GM12878 (cell line): ENCODE measurements at regions of chr17 and their contacts with region 1.

Region 1: DNA sequence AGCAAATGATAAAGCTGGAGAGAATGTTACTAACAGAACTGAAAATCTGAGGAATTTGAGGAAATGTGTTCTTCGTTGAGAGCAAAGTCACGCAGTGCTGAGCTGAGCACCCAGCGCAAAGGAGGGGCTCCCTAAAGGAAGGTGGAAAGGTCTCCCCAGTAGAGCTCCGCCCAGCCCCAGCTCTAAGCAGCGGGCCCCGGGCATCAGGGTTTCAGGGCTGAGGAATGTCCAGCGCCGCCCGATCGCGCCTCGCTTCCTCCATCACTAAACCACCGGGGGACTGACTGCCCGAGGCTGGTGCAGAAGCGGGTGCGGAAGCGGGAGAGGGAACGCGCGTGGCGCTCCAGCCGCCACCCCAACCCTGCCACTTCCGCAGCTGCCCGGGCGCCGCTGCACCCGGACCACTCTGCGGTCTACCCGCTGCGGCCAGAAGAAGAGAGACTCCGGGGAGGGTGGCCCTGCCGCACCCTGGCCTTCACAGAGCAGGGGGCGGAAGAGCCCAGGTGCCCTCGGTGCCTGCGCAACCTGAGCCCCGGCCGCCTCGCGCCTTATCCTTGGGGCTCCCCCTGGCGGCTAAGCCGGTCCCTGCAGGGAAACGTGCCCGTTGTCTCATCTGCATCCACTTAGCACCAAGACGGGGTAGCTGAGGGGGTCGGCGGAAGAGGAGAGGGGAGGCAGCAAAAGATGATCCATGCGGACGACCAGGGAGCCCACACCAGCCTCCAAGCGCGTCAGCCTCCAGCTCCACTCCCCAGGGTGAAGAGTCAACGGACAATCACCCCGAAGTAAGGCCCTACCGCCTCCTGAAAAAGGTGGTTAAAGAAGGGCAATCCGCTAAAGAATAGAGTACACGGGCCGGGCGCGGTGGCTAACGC is 12.4 kb upstream of the GUCY2D start:
- DNase-seq: peak; percentile 49
- ATAC-seq: peak; percentile 94
- H3K4me3 ChIP-seq: peak overlapping the region; percentile 63; the same call in 1 of the 2 replicates
- H3K27ac ChIP-seq: no peak overlapping the region
- H3K4me1 ChIP-seq: peaks cover 5% of the 10 kb centered on the region
- H3K27me3 ChIP-seq: 0 out of 4 replicates have a peak, but pooled peaks cover 0 to 2% of the 10 kb centered on the region in 2 experiments
- CTCF ChIP-seq: peak; percentile 93 to 98 (median 94)
- EP300 ChIP-seq: no peak
- POLR2A ChIP-seq: peak; percentile 74
- RAD21 ChIP-seq: peak; percentile 68

Region 2: GRCh38 chr17:7740481-7741001 is 249.5 kb before region 1 on chr17:
- CTCF ChIA-PET with region 1: interaction called, 50 read pairs
- POLR2A ChIA-PET with region 1: no interaction called
- RAD21 ChIA-PET with region 1: interaction called, 28 read pairs
- SMC1A ChIA-PET with region 1: interaction called, 25 read pairs
- in situ Hi-C with region 1: no loop called
- intact Hi-C with region 1: loop called (anchors 1 kb)
- DNase-seq: no peak
- ATAC-seq: no peak
- H3K4me3 ChIP-seq: no peak overlapping the region
- H3K27ac ChIP-seq: no peak overlapping the region
- H3K4me1 ChIP-seq: no peaks in the 10 kb centered on the region
- H3K27me3 ChIP-seq: no peaks in the 10 kb centered on the region; a peak in 2 of 4 replicates
- CTCF ChIP-seq: no peak
- EP300 ChIP-seq: no peak
- POLR2A ChIP-seq: no peak
- RAD21 ChIP-seq: no peak

Region 3: GRCh38 chr17:7825206-7825990 is 164.6 kb before region 1 on chr17:
- CTCF ChIA-PET with region 1: interaction called, 9 read pairs
- POLR2A ChIA-PET with region 1: no interaction called
- RAD21 ChIA-PET with region 1: interaction called, 5 read pairs
- SMC1A ChIA-PET with region 1: interaction called, 3 read pairs
- in situ Hi-C with region 1: loop called (anchors 5 kb)
- intact Hi-C with region 1: loop called (anchors 1 kb)
- DNase-seq: no peak
- ATAC-seq: 0 out of 3 replicates have a peak, but pooled peaks have one; percentile 28
- H3K4me3 ChIP-seq: no peak overlapping the region
- H3K27ac ChIP-seq: no peak overlapping the region
- H3K4me1 ChIP-seq: no peaks in the 10 kb centered on the region
- H3K27me3 ChIP-seq: no peaks in the 10 kb centered on the region; a peak in 1 of 4 replicates
- CTCF ChIP-seq: no peak; a peak in 1 of 6 replicates
- EP300 ChIP-seq: no peak
- POLR2A ChIP-seq: no peak
- RAD21 ChIP-seq: no peak

Region 4: DNA sequence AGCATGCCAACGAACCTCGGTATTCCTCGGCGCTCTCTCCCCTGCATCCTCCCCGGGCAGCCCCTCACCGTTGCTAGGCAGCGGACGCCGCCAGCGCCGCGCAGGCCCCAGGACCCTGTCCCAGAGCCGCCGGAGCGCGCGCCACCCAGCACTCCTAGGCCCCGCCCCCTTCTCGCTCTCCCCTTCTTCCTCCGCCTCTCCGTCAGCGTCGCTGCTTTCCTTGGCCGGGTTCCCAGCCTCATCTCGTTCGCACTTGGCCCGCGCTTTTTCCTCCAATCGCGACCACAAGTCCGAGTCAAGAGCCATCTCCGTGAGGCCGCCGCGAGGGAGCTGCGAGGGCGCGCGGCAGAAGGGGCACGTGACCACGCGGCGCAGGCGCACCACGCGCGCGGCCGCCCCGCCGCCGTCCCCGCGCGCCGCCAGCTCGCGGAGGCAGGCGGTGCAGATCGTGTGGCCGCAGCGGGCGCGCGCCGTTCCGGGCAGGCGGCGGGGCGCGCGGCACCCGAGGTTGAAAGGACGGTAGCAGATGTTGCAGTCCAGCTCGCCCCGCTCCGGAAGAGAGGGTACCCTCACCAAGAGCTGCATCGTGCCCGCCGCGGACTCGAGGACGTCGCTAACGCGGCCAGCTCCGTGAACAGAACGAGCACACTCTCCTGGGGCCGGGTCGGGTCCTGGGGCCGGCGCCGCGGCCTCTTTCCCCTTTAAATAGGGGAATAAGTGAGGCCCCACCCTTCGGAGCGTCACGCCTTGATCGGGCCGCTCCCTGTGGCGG is 74.2 kb before region 1 on chr17 and contains the start of gene RNF227:
- CTCF ChIA-PET with region 1: interaction called, 79 read pairs
- POLR2A ChIA-PET with region 1: interaction called, 6 read pairs
- RAD21 ChIA-PET with region 1: interaction called, 75 read pairs
- SMC1A ChIA-PET with region 1: interaction called, 39 read pairs
- in situ Hi-C with region 1: loop called (anchors 5 kb)
- intact Hi-C with region 1: loop called (anchors 1 kb)
- DNase-seq: peak; percentile 57
- ATAC-seq: peak; percentile 87
- H3K4me3 ChIP-seq: peak within 1 kb of the TSS; percentile 76
- H3K27ac ChIP-seq: peak within 1 kb of the TSS; percentile 34
- H3K4me1 ChIP-seq: peaks cover 10% of the 10 kb centered on the region
- H3K27me3 ChIP-seq: no peaks in the 10 kb centered on the region
- CTCF ChIP-seq: 0 out of 6 replicates have a peak, but pooled peaks of 1 of the 3 experiments have one; percentile 6
- EP300 ChIP-seq: no peak
- POLR2A ChIP-seq: peak; percentile 71
- RAD21 ChIP-seq: no peak
- polyA plus RNA-seq, gene RNF227: 0.49 to 0.87 TPM

Region 5: GRCh38 chr17:7944326-7944725 is 45.7 kb before region 1 on chr17:
- CTCF ChIA-PET with region 1: interaction called, 13 read pairs
- POLR2A ChIA-PET with region 1: no interaction called
- RAD21 ChIA-PET with region 1: no interaction called
- SMC1A ChIA-PET with region 1: interaction called, 5 read pairs
- in situ Hi-C with region 1: no loop called
- intact Hi-C with region 1: no loop called
- DNase-seq: no peak
- ATAC-seq: no peak
- H3K4me3 ChIP-seq: no peak overlapping the region
- H3K27ac ChIP-seq: no peak overlapping the region
- H3K4me1 ChIP-seq: no peaks in the 10 kb centered on the region
- H3K27me3 ChIP-seq: no peaks in the 10 kb centered on the region
- CTCF ChIP-seq: no peak
- EP300 ChIP-seq: no peak
- POLR2A ChIP-seq: no peak
- RAD21 ChIP-seq: no peak

Region 6: GRCh38 chr17:8041249-8041928 is 51.4 kb after region 1 on chr17:
- CTCF ChIA-PET with region 1: interaction called, 39 read pairs
- POLR2A ChIA-PET with region 1: no interaction called
- RAD21 ChIA-PET with region 1: interaction called, 24 read pairs
- SMC1A ChIA-PET with region 1: interaction called, 17 read pairs
- in situ Hi-C with region 1: no loop called
- intact Hi-C with region 1: no loop called
- DNase-seq: no peak
- ATAC-seq: peak; percentile 80
- H3K4me3 ChIP-seq: no peak overlapping the region
- H3K27ac ChIP-seq: no peak overlapping the region
- H3K4me1 ChIP-seq: no peaks in the 10 kb centered on the region
- H3K27me3 ChIP-seq: peaks cover 0 to 3% of the 10 kb centered on the region in 2 experiments; a peak in 2 of 4 replicates
- CTCF ChIP-seq: peak; percentile 54 to 79 (median 67); a peak in 5 of 6 replicates
- EP300 ChIP-seq: no peak
- POLR2A ChIP-seq: no peak
- RAD21 ChIP-seq: peak; percentile 78

Region 7: DNA sequence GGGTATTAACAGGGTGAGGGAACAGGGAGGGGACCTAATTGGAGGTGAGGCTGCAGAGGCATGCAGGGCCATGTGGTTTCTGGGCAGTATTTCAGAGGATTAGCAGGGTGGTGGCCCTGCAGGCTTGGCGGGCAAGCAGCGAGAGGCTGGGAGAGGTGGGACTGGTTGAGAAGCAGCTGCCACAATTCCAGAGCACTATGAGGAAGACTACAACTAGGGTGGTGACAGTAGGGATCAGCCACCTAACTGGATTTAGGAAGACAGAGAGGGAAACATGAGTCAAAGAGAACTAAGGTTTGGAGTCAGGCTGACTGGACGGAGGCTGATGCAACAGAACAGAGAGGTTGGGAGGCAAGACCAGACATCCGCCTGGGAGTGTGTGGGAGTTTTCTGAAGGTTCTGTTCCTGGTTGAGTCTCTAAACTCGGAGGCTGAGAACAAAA is 116.0 kb after region 1 on chr17:
- CTCF ChIA-PET with region 1: no interaction called
- POLR2A ChIA-PET with region 1: no interaction called
- RAD21 ChIA-PET with region 1: no interaction called
- SMC1A ChIA-PET with region 1: no interaction called
- in situ Hi-C with region 1: no loop called
- intact Hi-C with region 1: no loop called
- DNase-seq: no peak
- ATAC-seq: peak; percentile 20; the same call in 1 of the 3 replicates
- H3K4me3 ChIP-seq: no peak overlapping the region
- H3K27ac ChIP-seq: no peak overlapping the region
- H3K4me1 ChIP-seq: peaks cover 4% of the 10 kb centered on the region
- H3K27me3 ChIP-seq: no peaks in the 10 kb centered on the region
- CTCF ChIP-seq: no peak
- EP300 ChIP-seq: no peak
- POLR2A ChIP-seq: no peak
- RAD21 ChIP-seq: no peak